ENCODE measurements at regions of chr5 and their contacts with region 1.

Region 1: GRCh38 chr5:80083101-80083890 is 48.1 kb downstream of the THBS4 start:
- DNase-seq: no peak
- ATAC-seq: peak; percentile 67
- H3K4me3 Mint-ChIP-seq: peak overlapping the region; percentile 72
- H3K27ac Mint-ChIP-seq: no peak overlapping the region
- H3K4me1 Mint-ChIP-seq: peaks cover 7% of the 10 kb centered on the region
- H3K27me3 Mint-ChIP-seq: no peaks in the 10 kb centered on the region
- CTCF ChIP-seq: no peak

Region 2: GRCh38 chr5:79020861-79021561 is 1062.3 kb before region 1 on chr5:
- CTCF ChIA-PET with region 1: no interaction called
- POLR2A ChIA-PET with region 1: no interaction called
- intact Hi-C with region 1: loop called (anchors 1 kb)
- DNase-seq: no peak
- ATAC-seq: peak; percentile 66
- H3K4me3 Mint-ChIP-seq: no peak overlapping the region
- H3K27ac Mint-ChIP-seq: no peak overlapping the region
- H3K4me1 Mint-ChIP-seq: peaks cover 17% of the 10 kb centered on the region
- H3K27me3 Mint-ChIP-seq: peaks cover 50% of the 10 kb centered on the region
- CTCF ChIP-seq: no peak

Region 3: DNA sequence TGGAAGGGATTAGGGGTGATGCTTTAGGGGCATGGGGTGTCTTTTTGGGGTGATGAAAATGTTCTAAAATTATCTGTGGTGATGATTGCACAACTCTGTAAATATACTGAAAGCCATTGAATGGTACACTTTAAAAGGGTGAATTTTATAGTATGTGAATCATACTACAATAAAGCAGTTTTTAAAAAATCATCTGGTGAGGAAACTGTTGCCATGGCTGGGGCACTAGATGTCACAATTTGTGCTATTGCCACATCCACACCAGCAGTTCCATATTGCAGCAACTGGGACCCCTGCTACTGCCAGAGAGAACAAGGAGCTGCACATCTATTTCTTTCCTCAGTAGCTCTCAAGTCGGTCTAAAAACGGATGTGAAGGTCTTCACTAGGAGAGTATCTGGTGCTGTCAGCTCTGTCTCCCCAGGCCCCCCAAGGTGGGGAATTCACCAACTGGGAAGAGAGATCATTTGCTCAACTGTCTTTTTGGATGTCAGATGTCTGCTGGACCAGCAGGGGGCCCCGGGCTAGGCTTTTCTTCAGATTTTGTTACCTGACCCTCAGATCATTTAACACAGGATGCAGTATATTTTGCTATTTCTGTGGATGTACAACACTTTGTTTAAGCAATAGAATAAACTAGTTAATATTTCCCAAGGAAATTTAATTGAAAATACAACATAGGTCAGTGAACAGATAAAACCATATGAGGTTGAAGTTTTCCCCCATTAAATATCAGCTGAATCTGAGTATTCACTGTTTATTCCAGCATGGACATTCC is 380.5 kb before region 1 on chr5:
- CTCF ChIA-PET with region 1: no interaction called
- POLR2A ChIA-PET with region 1: no interaction called
- intact Hi-C with region 1: loop called (anchors 1 kb)
- DNase-seq: no peak
- ATAC-seq: no peak
- H3K4me3 Mint-ChIP-seq: no peak overlapping the region
- H3K27ac Mint-ChIP-seq: no peak overlapping the region
- H3K4me1 Mint-ChIP-seq: peaks cover 8% of the 10 kb centered on the region
- H3K27me3 Mint-ChIP-seq: no peaks in the 10 kb centered on the region
- CTCF ChIP-seq: no peak

Region 4: GRCh38 chr5:79857714-79858409 is 225.4 kb before region 1 on chr5:
- CTCF ChIA-PET with region 1: no interaction called
- POLR2A ChIA-PET with region 1: no interaction called
- intact Hi-C with region 1: loop called (anchors 1 kb)
- DNase-seq: peak; percentile 53
- ATAC-seq: peak; percentile 47
- H3K4me3 Mint-ChIP-seq: no peak overlapping the region
- H3K27ac Mint-ChIP-seq: no peak overlapping the region
- H3K4me1 Mint-ChIP-seq: no peaks in the 10 kb centered on the region
- H3K27me3 Mint-ChIP-seq: peaks cover 10% of the 10 kb centered on the region
- CTCF ChIP-seq: no peak

Region 5: DNA sequence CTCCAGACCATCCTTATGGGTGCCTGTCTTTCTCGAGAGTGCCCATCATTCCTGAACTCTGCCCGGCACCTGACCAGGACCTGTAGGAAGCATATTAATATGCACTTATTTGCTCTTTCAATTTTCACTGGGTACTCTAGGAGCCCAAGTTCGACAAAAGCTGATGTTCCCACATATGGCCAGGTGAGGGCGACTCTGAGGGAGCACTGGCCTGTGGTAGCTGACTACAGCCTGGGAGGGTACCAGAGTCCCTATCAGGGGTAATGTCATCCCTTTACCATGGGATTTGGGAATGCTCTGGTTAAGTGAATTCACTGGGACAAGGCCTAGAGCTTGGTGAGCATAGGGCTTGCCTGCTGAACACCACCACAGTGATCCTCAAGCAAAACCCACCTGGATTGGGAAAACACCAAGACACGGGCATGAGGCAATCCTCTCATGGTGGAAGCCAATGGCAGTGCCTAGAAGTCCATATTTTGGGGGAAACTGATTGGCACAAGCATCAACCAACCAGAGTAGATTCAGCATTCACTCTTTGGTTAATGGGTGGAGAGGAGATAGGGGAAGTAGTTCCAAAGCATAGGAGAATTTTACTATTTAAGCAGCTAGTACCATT is 204.5 kb before region 1 on chr5:
- CTCF ChIA-PET with region 1: interaction called, 8 read pairs
- POLR2A ChIA-PET with region 1: no interaction called
- intact Hi-C with region 1: loop called (anchors 1 kb)
- DNase-seq: no peak
- ATAC-seq: no peak
- H3K4me3 Mint-ChIP-seq: no peak overlapping the region
- H3K27ac Mint-ChIP-seq: no peak overlapping the region
- H3K4me1 Mint-ChIP-seq: peaks cover 3% of the 10 kb centered on the region
- H3K27me3 Mint-ChIP-seq: peaks cover 2% of the 10 kb centered on the region
- CTCF ChIP-seq: no peak

Region 6: DNA sequence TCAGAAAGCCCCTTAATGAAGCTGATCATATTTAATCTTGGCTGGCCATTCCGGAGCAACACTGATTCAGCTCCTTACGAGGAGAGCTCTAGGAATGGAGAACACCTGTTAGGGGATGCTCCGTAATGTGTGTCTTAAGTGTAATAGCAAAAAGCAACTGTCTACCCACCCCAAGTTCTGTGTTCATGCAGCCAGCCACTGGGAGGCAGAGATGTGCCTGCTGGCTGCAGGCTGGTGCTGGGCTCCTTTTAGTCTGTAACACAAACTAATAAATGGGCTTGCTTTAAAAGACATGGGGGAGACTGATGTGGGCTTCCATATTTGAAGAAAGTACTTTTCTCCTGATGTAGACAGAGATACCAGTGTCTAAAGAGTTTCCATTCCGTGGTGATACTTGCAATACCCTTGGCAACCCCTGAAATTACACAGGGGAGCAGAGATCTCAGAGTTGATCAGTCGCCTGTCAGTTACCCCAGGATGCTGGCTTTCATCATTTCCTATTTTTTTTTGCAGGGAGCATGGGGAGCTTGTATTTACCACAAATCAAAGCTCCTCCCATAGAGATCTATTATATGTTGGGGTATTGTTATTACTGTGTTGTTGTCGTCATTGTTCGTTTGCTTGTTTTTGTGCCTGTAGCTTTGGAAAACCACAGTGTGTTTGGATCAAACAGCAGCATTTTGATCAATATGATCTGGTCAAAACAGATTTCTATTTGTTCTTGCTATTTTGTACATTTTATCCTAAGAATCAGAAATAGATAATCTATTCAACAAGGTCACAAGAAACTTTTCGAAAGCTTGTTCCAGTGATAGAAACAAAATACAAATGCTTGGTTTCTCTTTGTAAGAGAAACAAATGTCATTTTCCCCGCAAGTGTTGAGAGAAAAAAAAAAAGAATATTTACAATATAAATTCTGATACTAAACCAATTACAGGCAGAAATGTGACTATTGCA is 158.1 kb before region 1 on chr5:
- CTCF ChIA-PET with region 1: interaction called, 10 read pairs
- POLR2A ChIA-PET with region 1: no interaction called
- intact Hi-C with region 1: no loop called
- DNase-seq: no peak
- ATAC-seq: no peak
- H3K4me3 Mint-ChIP-seq: no peak overlapping the region
- H3K27ac Mint-ChIP-seq: no peak overlapping the region
- H3K4me1 Mint-ChIP-seq: no peaks in the 10 kb centered on the region
- H3K27me3 Mint-ChIP-seq: peaks cover 7% of the 10 kb centered on the region
- CTCF ChIP-seq: no peak

Region 7: GRCh38 chr5:80308526-80308925 is 225.2 kb after region 1 on chr5:
- CTCF ChIA-PET with region 1: interaction called, 171 read pairs
- POLR2A ChIA-PET with region 1: no interaction called
- intact Hi-C with region 1: no loop called
- DNase-seq: no peak
- ATAC-seq: no peak
- H3K4me3 Mint-ChIP-seq: no peak overlapping the region
- H3K27ac Mint-ChIP-seq: no peak overlapping the region
- H3K4me1 Mint-ChIP-seq: no peaks in the 10 kb centered on the region
- H3K27me3 Mint-ChIP-seq: no peaks in the 10 kb centered on the region
- CTCF ChIP-seq: no peak

Measured in activated B cell treated with CpG ODN at 0.5 μM for 24 hours (primary cell).